GM12878 (cell line): ENCODE measurements at regions of chr19 and their contacts with region 1.

Region 1: GRCh38 chr19:50329146-50329925 is at the start of gene KCNC3:
- DNase-seq: peak; percentile 83
- ATAC-seq: peak; percentile 78
- H3K4me3 ChIP-seq: peak within 1 kb of the TSS; percentile 66
- H3K27ac ChIP-seq: peak within 1 kb of the TSS; percentile 58
- H3K4me1 ChIP-seq: peaks cover 36% of the 10 kb centered on the region
- H3K27me3 ChIP-seq: peaks cover 2 to 16% of the 10 kb centered on the region in 2 experiments; a peak in 3 of 4 replicates
- CTCF ChIP-seq: no peak
- EP300 ChIP-seq: no peak
- POLR2A ChIP-seq: peak; percentile 92
- RAD21 ChIP-seq: no peak
- polyA plus RNA-seq, gene KCNC3: not detected

Region 2: GRCh38 chr19:50230379-50231351 is 98.7 kb before region 1 on chr19:
- CTCF ChIA-PET with region 1: no interaction called
- POLR2A ChIA-PET with region 1: no interaction called
- RAD21 ChIA-PET with region 1: no interaction called
- SMC1A ChIA-PET with region 1: no interaction called
- in situ Hi-C with region 1: no loop called
- intact Hi-C with region 1: no loop called
- DNase-seq: no peak
- ATAC-seq: no peak
- H3K4me3 ChIP-seq: no peak overlapping the region
- H3K27ac ChIP-seq: no peak overlapping the region
- H3K4me1 ChIP-seq: no peaks in the 10 kb centered on the region
- H3K27me3 ChIP-seq: no peaks in the 10 kb centered on the region
- CTCF ChIP-seq: no peak
- EP300 ChIP-seq: no peak
- POLR2A ChIP-seq: no peak
- RAD21 ChIP-seq: no peak

Region 3: GRCh38 chr19:50264483-50265186 is 64.7 kb before region 1 on chr19:
- CTCF ChIA-PET with region 1: interaction called, 3 read pairs
- POLR2A ChIA-PET with region 1: no interaction called
- RAD21 ChIA-PET with region 1: interaction called, 10 read pairs
- SMC1A ChIA-PET with region 1: no interaction called
- in situ Hi-C with region 1: no loop called
- intact Hi-C with region 1: no loop called
- DNase-seq: no peak
- ATAC-seq: no peak
- H3K4me3 ChIP-seq: no peak overlapping the region
- H3K27ac ChIP-seq: no peak overlapping the region
- H3K4me1 ChIP-seq: no peaks in the 10 kb centered on the region
- H3K27me3 ChIP-seq: no peaks in the 10 kb centered on the region
- CTCF ChIP-seq: peak in 1 of 3 experiments; percentile 24; a peak in 2 of 6 replicates
- EP300 ChIP-seq: no peak
- POLR2A ChIP-seq: no peak
- RAD21 ChIP-seq: 0 out of 2 replicates have a peak, but pooled peaks have one; percentile 8

Region 4: GRCh38 chr19:50315773-50316448 is 13.4 kb before region 1 on chr19:
- CTCF ChIA-PET with region 1: interaction called, 5 read pairs
- POLR2A ChIA-PET with region 1: interaction called, 6 read pairs
- RAD21 ChIA-PET with region 1: interaction called, 10 read pairs
- SMC1A ChIA-PET with region 1: interaction called, 3 read pairs
- in situ Hi-C with region 1: no loop called
- intact Hi-C with region 1: no loop called
- DNase-seq: no peak
- ATAC-seq: peak; percentile 93
- H3K4me3 ChIP-seq: peak overlapping the region; percentile 67; the same call in 1 of the 2 replicates
- H3K27ac ChIP-seq: no peak overlapping the region
- H3K4me1 ChIP-seq: no peaks in the 10 kb centered on the region
- H3K27me3 ChIP-seq: peaks cover 8 to 11% of the 10 kb centered on the region in 2 experiments
- CTCF ChIP-seq: peak in 1 of 3 experiments; percentile 18; a peak in 1 of 6 replicates
- EP300 ChIP-seq: no peak
- POLR2A ChIP-seq: 0 out of 2 replicates have a peak, but pooled peaks have one; percentile 14
- RAD21 ChIP-seq: no peak

Region 5: GRCh38 chr19:50341091-50341564 is 11.8 kb after region 1 on chr19:
- CTCF ChIA-PET with region 1: interaction called, 11 read pairs
- POLR2A ChIA-PET with region 1: interaction called, 38 read pairs
- RAD21 ChIA-PET with region 1: interaction called, 36 read pairs
- SMC1A ChIA-PET with region 1: interaction called, 49 read pairs
- in situ Hi-C with region 1: no loop called
- intact Hi-C with region 1: no loop called
- DNase-seq: peak; percentile 96
- ATAC-seq: peak; percentile 78
- H3K4me3 ChIP-seq: peak overlapping the region; percentile 90
- H3K27ac ChIP-seq: peak overlapping the region; percentile 95
- H3K4me1 ChIP-seq: peaks cover 20% of the 10 kb centered on the region
- H3K27me3 ChIP-seq: no peaks in the 10 kb centered on the region
- CTCF ChIP-seq: no peak
- EP300 ChIP-seq: peak; percentile 39 to 78; a peak in 3 of 4 replicates
- POLR2A ChIP-seq: peak; percentile 51
- RAD21 ChIP-seq: no peak

Region 6: GRCh38 chr19:51367565-51368365 is 1038.4 kb after region 1 on chr19:
- CTCF ChIA-PET with region 1: no interaction called
- POLR2A ChIA-PET with region 1: no interaction called
- RAD21 ChIA-PET with region 1: no interaction called
- SMC1A ChIA-PET with region 1: no interaction called
- in situ Hi-C with region 1: loop called (anchors 25 kb)
- intact Hi-C with region 1: no loop called
- DNase-seq: peak; percentile 96
- ATAC-seq: peak; percentile 88
- H3K4me3 ChIP-seq: peak overlapping the region; percentile 82
- H3K27ac ChIP-seq: peak overlapping the region; percentile 56
- H3K4me1 ChIP-seq: peaks cover 24% of the 10 kb centered on the region
- H3K27me3 ChIP-seq: no peaks in the 10 kb centered on the region
- CTCF ChIP-seq: no peak
- EP300 ChIP-seq: no peak
- POLR2A ChIP-seq: peak; percentile 87
- RAD21 ChIP-seq: no peak